SK-N-SH (cell line): ENCODE measurements at regions of chr10 and their contacts with region 1.

Region 1: GRCh38 chr10:83166372-83166771 is 972.9 kb upstream of the GHITM start:
- DNase-seq: peak; percentile 27
- H3K4me3 ChIP-seq: no peak overlapping the region
- H3K27ac ChIP-seq: no peak overlapping the region; a peak in 2 of 4 replicates
- H3K4me1 ChIP-seq: peaks cover 0 to 15% of the 10 kb centered on the region in 2 experiments; a peak in 2 of 4 replicates
- H3K27me3 ChIP-seq: no peaks in the 10 kb centered on the region
- CTCF ChIP-seq: no peak; the same call in 1 of the 2 replicates
- EP300 ChIP-seq: no peak
- RAD21 ChIP-seq: peak; percentile 61

Region 2: DNA sequence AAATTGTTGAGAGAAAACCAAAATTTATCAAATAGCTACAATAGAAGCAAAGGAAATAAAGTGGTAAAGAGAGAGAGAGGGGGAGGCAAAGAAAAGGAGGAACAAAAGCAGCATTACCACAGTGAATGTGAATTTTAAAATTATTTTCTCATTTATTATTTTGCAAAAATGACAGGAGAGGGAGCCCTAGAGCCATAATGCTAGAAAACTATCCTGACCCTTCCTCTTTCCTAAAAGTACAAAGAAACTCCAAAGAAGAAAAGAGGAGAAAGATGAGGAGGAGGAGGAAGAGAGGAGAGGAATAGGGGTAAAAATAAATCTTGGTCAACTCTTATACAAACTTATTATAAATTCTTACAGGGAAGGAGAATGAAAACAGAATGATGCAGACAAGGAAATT is 369.9 kb before region 1 on chr10:
- CTCF ChIA-PET with region 1: interaction called, 13 read pairs
- POLR2A ChIA-PET with region 1: no interaction called
- DNase-seq: peak; percentile 9
- H3K4me3 ChIP-seq: no peak overlapping the region; a peak in 1 of 4 replicates
- H3K27ac ChIP-seq: no peak overlapping the region
- H3K4me1 ChIP-seq: peaks cover 3 to 4% of the 10 kb centered on the region in 2 experiments; a peak in 2 of 4 replicates
- H3K27me3 ChIP-seq: no peaks in the 10 kb centered on the region
- CTCF ChIP-seq: peak; percentile 76
- EP300 ChIP-seq: no peak
- RAD21 ChIP-seq: peak; percentile 88

Region 3: DNA sequence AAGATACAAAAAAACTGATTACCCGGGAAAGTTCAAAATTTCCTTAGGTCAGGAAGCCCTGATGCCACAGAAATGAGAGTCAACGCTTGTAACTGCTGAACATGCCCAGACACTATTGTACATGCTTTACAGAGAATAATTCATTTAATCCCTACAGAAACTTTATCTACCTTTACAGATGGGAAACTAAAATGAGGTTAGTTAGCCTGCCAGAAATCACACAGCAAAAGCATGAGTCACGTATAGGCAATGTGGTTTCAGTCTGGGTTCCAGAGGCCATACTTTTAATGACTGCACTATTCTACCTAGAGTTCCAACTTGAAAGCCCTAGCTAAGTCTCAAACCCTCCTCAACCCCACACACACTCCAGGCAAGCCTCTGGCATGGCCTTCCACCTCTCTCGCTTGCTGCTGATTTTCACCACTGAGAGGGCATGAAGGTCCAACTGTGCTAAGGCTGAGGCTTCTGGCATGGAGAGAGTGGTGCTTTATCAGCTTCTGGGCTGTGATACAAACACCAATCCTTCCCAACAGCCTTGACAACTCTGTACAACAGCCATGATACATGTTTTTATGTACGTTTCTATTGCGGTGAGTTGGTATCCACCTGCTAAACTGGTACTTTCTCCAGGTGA is 38.3 kb before region 1 on chr10:
- CTCF ChIA-PET with region 1: no interaction called
- POLR2A ChIA-PET with region 1: no interaction called
- DNase-seq: no peak
- H3K4me3 ChIP-seq: no peak overlapping the region
- H3K27ac ChIP-seq: peak overlapping the region in 1 of 2 experiments; percentile 22; a peak in 1 of 4 replicates
- H3K4me1 ChIP-seq: peaks cover 0 to 3% of the 10 kb centered on the region in 2 experiments; a peak in 2 of 4 replicates
- H3K27me3 ChIP-seq: no peaks in the 10 kb centered on the region
- CTCF ChIP-seq: no peak
- EP300 ChIP-seq: no peak
- RAD21 ChIP-seq: no peak

Region 4: DNA sequence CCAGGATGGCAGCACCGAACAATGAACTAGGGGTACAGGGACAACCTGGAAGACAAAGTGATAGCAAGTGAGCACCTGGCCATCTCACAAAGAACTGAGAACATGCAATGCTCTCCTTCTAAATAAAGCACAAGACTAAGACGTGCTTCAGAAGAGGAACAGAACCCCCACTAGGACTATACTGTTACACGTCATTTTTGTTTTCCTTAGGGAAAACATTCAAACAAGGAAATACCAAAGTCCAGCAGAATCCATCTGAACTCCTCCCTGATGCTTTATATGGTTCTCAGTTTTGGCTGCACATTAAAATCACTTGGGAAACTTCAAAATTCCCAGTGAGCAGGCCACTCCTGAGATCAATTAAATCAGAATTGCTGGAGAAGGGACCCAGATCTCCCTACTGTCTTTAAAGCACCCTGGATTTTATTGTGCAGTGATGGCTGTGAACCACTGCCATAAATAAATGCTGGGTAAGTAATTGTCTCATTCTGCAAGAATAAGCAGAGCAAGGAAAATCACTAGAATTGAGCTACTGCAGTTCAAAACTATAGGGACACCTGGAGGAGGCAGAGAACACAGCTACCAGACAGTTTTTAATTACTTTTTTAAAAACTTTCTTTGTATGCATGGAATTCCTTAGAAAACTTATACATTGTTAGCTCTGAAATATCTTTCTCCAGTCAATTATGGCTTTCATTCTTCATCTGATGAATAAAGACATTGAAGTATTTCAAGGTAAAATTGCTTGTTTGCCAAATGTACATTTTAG is 106.5 kb after region 1 on chr10:
- CTCF ChIA-PET with region 1: interaction called, 10 read pairs
- POLR2A ChIA-PET with region 1: no interaction called
- DNase-seq: no peak
- H3K4me3 ChIP-seq: no peak overlapping the region
- H3K27ac ChIP-seq: peak overlapping the region in 1 of 2 experiments; percentile 86; a peak in 1 of 4 replicates
- H3K4me1 ChIP-seq: peaks cover 0 to 10% of the 10 kb centered on the region in 2 experiments; a peak in 2 of 4 replicates
- H3K27me3 ChIP-seq: no peaks in the 10 kb centered on the region
- CTCF ChIP-seq: no peak
- EP300 ChIP-seq: no peak
- RAD21 ChIP-seq: peak; percentile 43